Cardiac septum (tissue), 1 donor: ENCODE measurements at regions of chr2 and their contacts with region 1.

Region 1: DNA sequence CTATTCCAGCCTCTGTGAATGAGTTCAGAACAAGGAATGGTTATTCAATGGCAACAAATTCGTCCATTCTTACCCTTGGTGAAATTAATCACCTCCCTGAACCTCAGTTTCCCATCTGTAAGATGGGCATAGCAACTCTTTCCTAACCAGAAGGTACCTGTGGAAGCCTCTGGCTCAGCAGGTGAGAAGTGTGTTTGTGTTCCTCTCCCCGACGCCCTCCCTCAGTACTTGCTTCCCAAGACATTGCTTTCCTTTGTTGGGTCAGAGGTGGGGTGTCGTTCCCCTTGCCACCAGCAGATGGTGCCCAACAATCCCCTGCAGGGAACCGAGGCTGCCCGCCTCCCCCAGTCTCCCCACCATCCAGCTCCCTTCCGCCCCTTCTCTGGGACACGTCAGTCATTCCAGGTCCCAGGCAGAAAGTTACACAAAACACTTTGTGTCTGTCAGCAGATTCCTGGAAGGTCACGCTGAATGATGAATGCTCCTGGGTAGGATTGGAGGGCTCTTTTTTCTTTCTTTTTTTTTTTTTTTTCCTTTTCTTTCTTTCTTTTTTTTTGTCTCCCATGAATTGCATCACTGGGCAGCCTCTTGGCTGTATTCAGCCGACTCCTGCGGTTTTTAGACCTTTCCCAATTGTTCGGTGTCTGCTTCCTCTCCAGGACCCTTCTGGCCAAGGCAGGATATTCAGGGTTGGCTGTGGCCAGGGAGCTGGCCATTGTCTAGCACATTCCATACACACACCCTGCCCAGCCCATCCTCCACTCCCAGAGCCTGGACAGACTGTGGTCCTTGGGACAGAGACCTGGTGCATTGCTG is 117.3 kb downstream of the LPIN1 start:
- DNase-seq: peak; percentile 92

Region 2: DNA sequence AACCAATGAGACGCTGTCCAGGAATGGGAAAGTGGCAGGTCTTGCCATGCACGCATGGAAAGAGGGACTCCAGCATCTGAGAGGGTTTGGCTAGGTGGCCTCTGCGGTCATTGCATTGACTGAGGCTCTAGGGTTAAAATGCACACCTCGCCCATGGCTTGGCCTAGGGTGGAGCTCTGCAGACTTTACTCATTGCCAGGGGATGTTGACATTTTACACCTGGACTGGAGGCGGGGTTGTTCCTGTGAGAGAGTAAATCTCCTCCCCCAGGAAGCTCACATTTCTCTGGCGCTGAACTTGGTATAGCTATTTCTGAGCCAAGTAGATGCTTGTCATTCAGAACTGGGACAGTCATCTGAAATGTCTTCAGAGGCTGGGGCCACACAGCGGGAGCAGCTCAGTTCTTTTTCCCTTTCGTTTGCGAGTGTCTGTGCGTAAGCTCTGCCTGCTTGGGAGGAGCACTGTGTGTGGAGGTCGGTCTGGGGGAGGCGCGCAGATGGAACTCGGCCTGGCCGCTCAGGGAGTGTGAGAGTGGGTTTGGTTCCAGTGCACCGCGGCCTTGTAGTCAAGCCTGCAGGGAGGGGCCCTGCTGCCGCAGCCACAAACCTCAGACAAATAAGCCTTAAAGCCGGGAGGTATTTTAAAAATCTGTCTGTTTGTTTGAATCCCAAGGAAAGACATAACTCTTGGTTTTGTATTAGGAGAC is 40.8 kb before region 1 on chr2:
- intact Hi-C with region 1: no loop called
- DNase-seq: no peak

Region 3: DNA sequence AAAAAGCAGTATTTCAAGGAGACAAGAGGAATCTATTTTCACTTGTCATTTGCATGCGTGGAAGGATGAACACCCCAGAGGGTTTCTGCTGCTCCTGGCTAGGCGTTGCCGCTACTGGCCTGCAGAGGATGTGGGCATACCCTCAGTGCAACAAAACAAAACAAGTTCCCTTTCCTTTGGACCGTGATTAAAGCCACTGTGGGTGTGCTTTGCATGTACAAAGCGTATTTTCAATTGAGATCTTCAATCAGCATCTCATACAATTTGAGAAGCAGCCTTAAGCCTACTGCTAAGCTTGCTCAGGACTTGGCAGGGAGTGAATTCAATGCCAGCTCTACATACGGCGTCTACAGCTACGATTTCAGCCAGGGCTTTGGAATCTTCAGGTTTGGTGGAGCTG is 181.1 kb after region 1 on chr2:
- intact Hi-C with region 1: loop called (anchors 5 kb)
- DNase-seq: no peak

Region 4: DNA sequence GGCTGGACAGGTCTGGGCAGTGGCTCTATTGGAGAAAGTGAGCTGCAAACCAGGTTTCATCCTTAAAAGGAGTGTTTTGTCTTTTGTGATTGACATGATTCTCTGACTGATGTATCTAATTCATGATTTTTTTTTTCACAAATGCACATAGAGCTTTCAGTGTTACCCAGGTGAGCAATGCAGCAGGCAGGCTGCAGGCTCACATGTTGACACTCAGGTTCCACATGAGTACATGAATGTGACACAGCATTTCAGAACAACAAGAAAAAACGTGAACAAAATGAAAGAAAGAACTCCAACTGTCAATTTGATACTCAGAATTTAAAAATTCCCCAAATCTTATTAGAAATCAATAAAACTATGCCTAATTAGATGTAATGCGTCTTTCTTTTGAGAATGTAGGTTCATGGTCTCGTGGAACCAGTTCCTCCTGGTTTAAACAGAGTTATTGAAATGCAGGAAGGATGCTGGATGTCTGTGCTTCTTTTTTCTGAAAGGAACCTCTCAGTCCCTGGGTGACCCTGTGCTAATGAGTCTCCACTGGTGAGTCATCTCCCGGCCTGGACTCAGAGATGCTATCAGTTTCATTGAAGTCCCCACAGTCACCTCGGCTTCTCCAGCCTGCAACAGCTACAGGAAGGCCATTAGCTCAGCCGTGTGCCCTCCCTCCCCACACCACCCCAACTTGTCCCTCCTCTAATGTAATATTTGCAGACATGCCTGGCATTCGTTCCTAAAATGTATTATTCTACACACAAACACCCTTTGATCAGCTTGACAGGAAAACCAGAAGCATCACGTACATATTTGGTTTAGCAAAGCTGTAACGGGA is 313.1 kb after region 1 on chr2:
- intact Hi-C with region 1: loop called (anchors 10 kb)
- DNase-seq: no peak

Region 5: GRCh38 chr2:12555012-12555645 is 691.4 kb after region 1 on chr2:
- intact Hi-C with region 1: loop called (anchors 10 kb)
- DNase-seq: no peak